Activated naive CD8-positive, alpha-beta T cell treated with anti-CD3 and anti-CD28 coated beads, Interleukin-2, amount 10 ng/mL, durations not matched to agents 7 days and 5 days (primary cell): ENCODE measurements at regions of chr7 and their contacts with region 1.

Region 1: GRCh38 chr7:2709553-2710285 is 21.7 kb downstream of the AMZ1 start:
- DNase-seq: peak; percentile 89
- ATAC-seq: peak; percentile 91
- H3K4me3 Mint-ChIP-seq: peak overlapping the region; percentile 44
- H3K27ac Mint-ChIP-seq: no peak overlapping the region
- H3K4me1 Mint-ChIP-seq: peaks cover 26% of the 10 kb centered on the region
- H3K27me3 Mint-ChIP-seq: peaks cover 62% of the 10 kb centered on the region

Region 2: DNA sequence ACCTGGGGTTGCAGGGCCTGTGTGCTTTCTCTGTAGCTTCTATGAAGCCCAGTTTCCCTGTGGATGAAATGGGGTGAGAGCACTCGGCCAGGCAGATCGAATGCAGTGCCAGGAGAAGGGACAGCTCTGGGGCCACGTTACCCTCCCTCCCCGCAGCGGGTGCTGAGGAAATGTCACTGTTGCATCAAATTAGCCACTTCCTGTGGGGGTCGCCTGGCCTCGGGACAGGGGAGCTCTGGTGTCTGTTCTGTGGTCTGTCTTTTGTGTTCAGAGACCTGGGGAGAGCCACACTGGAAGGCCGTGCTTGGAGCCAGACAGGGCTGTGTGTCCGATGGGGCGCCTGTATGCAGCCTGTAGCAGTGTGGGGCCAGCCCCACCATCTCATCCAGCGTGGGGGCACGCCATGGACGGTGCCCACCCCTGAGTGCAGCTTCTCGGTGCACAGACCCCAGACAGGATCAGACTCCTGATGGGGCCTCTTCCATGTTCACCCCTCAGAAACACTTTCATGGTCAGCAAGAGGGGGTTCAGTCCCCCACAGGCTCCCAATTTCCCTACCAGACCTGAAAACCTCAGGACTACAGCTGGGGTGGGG is 64.3 kb before region 1 on chr7:
- POLR2A ChIA-PET with region 1: interaction called, 12 read pairs
- DNase-seq: peak; percentile 77
- ATAC-seq: peak; percentile 77
- H3K4me3 Mint-ChIP-seq: peak overlapping the region; percentile 78
- H3K27ac Mint-ChIP-seq: peak overlapping the region; percentile 91
- H3K4me1 Mint-ChIP-seq: peaks cover 12% of the 10 kb centered on the region
- H3K27me3 Mint-ChIP-seq: no peaks in the 10 kb centered on the region

Region 3: DNA sequence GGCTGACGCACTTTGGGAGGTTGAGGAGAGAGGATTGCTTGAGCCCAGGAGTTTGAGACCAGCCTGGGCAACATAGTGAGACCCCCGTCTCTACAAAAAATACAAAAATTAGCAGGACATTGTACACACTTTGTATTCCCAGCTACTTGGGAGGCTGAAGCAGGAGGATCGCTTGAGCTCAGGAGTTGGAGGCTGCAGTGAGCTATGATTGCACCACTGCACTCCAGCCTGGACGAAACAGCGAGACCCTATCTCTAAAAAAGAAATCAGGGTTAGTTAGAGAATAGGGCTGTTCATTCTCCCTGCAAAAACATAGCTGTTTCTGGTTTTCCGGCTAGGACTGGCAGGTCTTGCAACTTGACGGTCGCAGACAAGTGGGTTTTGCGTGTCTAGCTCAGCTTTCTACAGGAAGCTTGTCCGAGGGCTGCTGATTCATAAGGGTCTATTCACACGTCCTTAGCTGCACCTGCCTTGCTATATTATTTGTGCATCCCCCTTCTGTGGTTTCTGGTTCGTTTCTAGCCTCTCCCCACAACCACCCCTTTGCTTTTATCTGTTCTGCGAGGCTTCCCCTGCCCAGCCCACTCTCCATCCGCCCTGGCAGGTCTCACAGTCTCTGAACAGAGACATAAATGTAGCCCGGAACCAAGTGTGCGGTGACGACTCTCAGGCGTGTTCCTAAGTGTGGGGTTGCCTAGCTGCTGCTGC is 11.0 kb before region 1 on chr7:
- POLR2A ChIA-PET with region 1: interaction called, 45 read pairs
- DNase-seq: peak; percentile 76
- ATAC-seq: peak; percentile 95
- H3K4me3 Mint-ChIP-seq: peak overlapping the region; percentile 63
- H3K27ac Mint-ChIP-seq: peak overlapping the region; percentile 83
- H3K4me1 Mint-ChIP-seq: peaks cover 26% of the 10 kb centered on the region
- H3K27me3 Mint-ChIP-seq: peaks cover 36% of the 10 kb centered on the region